Colonic mucosa (tissue), 4 donors: ENCODE measurements at regions of chr12 and their contacts with region 1.

Region 1: DNA sequence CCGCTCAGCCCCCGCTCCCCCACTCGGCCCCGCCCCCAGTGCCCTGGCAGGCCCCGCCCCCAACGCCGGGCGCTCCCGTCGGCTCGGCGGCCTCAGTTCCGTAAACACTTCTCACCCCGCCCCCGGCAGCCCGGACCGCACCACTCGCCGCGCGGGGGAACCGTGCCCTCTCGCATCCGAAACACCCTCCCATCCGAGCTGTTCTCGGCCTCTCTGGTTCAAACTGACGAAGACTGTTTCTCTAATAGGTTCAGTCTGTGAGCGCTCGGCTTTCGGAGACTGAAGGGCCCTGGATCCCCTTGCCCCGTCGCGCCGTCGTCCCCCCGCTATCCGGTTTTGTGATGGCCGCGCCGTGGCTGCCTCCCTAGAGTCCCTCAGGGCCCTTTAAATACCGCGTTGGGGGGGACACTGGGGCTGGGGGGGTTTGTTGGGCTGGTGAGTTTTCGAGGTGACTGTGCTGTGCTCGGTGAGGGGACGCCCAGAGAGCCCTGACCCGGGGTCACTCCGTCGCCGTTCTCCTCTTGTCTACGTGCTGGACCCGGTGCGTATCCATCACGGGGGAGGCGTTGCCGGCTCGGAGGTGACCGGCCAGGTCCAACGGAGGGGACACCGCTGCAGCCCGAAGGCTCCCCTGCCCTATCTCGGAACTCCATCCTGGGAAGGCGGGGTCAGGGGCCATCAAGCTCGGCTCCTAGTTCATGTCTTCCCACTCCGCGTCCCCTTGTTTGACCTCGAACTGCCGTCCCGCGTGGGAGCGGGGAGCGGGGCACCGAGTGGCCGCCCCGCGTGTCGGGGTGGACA is at the start of gene TCP11L2:
- DNase-seq: peak; percentile 91
- H3K4me3 ChIP-seq: peak within 1 kb of the TSS; percentile 84
- H3K27ac ChIP-seq: peak within 1 kb of the TSS; percentile 96
- H3K4me1 ChIP-seq: no peaks in the 10 kb centered on the region
- H3K27me3 ChIP-seq: no peaks in the 10 kb centered on the region
- CTCF ChIP-seq: no peak
- total RNA-seq, gene TCP11L2: 13.3 to 45.6 TPM

Region 2: GRCh38 chr12:107093417-107094182 is 791.0 kb after region 1 on chr12 and contains the start of gene CRY1:
- intact Hi-C with region 1: loop called (anchors 5 kb)
- DNase-seq: peak; percentile 96
- H3K4me3 ChIP-seq: peak within 1 kb of the TSS; percentile 76
- H3K27ac ChIP-seq: peak within 1 kb of the TSS; percentile 89
- H3K4me1 ChIP-seq: peaks cover 4% of the 10 kb centered on the region
- H3K27me3 ChIP-seq: no peaks in the 10 kb centered on the region
- CTCF ChIP-seq: no peak
- total RNA-seq, gene CRY1: 14.2 to 22.5 TPM